ENCODE measurements at regions of chr20 and their contacts with region 1.

Region 1: DNA sequence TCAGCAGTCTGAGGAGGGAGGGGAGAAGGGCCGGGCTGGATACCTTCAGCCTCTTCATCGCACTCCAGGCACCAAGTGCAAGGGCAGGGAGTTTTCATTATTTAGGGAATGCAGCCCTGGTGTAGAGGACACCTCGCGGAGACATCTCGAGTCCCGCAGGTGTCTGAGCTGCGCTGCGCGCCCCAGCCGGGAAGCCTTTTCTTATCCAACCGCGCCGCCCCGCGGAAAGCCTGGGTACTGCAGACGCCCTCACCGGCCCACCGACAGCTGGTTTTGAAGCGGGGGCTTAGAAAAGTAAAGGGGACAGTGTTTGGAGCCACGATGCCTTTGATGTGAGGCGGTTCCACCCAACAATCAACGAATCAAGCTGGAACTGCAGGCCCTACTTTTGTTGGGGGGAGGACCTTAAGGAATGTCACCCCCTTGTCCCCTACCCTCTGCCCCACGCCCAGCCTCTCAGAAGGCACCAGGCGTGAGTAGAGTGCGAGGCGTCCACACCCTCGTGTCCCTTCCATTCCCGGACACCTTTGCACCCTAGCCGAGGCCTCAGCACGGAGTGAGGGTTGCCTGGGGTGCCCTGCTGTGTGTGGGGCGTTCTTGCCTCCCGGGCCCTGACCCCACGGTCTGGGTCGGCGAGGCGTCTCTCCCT is 8.6 kb downstream of the NKX2-2 start:
- DNase-seq: peak in 9 of 10 donors; percentile 46 to 86 (median 80)
- H3K4me3 ChIP-seq: peak overlapping the region in 58 of 59 donors; percentile 25 to 73 (median 52)
- H3K27ac ChIP-seq: peak overlapping the region; percentile 47 to 98 (median 94)
- H3K27me3 ChIP-seq: peaks cover 0 to 76% (median 48%) of the 10 kb centered on the region in 45 donors
- CTCF ChIP-seq: peak; percentile 86 to 100 (median 98)

Region 2: GRCh38 chr20:20837574-20838021 is 667.7 kb before region 1 on chr20:
- intact Hi-C with region 1: loop called in 1 of 2 experiments (anchors 5 kb)
- DNase-seq: peak; percentile 41 to 83 (median 72)
- H3K4me3 ChIP-seq: peak overlapping the region in 18 of 59 donors; percentile 6 to 31 (median 18)
- H3K27ac ChIP-seq: no peak overlapping the region
- H3K27me3 ChIP-seq: peaks cover 0 to 26% (median 0%) of the 10 kb centered on the region in 45 donors
- CTCF ChIP-seq: peak; percentile 66 to 95 (median 84)

Region 3: GRCh38 chr20:20860078-20860806 is 645.0 kb before region 1 on chr20:
- intact Hi-C with region 1: loop called (anchors 5 kb)
- DNase-seq: peak; percentile 76 to 97 (median 91)
- H3K4me3 ChIP-seq: peak overlapping the region in 1 of 59 donors; percentile 5
- H3K27ac ChIP-seq: peak overlapping the region in 1 of 59 donors; percentile 57
- H3K27me3 ChIP-seq: peaks cover 0 to 15% (median 0%) of the 10 kb centered on the region in 45 donors
- CTCF ChIP-seq: peak; percentile 84 to 100 (median 98)

Region 4: GRCh38 chr20:21099751-21100577 is 405.3 kb before region 1 on chr20:
- intact Hi-C with region 1: loop called (anchors 5 kb)
- DNase-seq: peak in 4 of 10 donors; percentile 18 to 53 (median 43)
- H3K4me3 ChIP-seq: peak overlapping the region; percentile 29 to 76 (median 57)
- H3K27ac ChIP-seq: peak overlapping the region in 52 of 59 donors; percentile 3 to 84 (median 60)
- H3K27me3 ChIP-seq: peaks cover 3 to 95% (median 72%) of the 10 kb centered on the region in 45 donors
- CTCF ChIP-seq: peak in 4 of 56 donors; percentile 6 to 27 (median 13)

Region 5: GRCh38 chr20:21303061-21303871 is 202.0 kb before region 1 on chr20 and contains the start of gene XRN2:
- intact Hi-C with region 1: loop called (anchors 5 kb)
- DNase-seq: peak; percentile 86 to 98 (median 94)
- H3K4me3 ChIP-seq: peak within 1 kb of the TSS; percentile 72 to 100 (median 97)
- H3K27ac ChIP-seq: peak within 1 kb of the TSS; percentile 75 to 98 (median 94)
- H3K27me3 ChIP-seq: no peaks in the 10 kb centered on the region
- CTCF ChIP-seq: peak in 51 of 56 donors; percentile 14 to 73 (median 52)
- total RNA-seq, gene XRN2: 22.9 to 32.8 (median 27.2) TPM

Region 6: DNA sequence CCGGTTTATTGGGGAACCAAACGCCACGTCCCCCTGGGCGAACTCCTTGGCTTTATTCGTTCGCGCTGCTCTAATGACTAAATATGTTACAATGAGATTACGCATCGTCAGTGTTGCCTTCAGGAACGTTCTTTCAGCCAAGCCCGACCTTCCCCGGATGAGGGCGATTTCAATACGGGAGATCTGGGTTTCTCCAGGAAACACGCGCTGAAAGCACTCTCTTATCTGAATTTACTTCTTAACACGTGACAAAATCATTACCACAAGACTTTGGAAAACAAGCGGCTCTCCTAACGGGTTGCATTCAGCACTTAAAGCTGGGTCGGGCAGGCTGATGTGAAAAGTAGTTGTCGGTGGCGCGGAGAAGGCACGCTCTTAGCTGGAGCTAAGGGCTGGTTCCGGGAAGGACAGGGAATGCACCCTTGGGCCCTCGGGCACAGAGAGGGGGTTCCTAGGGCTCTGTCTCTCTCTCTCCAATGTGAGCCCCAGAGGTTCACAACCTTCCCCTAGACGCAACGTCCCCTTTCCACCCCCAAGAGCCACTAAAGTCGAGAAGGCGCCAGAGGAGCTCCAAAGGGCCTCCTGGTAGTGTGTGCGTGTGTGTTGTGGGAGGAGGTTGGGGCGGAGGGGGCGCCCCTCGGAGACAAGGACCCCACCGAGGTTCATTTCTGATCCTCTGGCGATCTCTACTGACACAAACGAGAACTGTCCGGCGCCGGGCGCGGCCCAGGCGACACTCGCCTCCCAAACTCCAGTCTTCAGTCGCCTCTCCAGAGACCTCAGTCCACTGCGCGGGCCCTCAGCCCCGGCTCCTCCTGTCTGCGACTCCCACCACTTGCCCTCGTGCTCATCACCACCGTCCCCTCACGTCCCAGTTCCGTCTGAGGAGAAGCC is 15.7 kb after region 1 on chr20:
- intact Hi-C with region 1: loop called in 1 of 2 experiments (anchors 2 kb)
- DNase-seq: peak in 4 of 10 donors; percentile 62 to 77 (median 70)
- H3K4me3 ChIP-seq: peak overlapping the region; percentile 33 to 83 (median 66)
- H3K27ac ChIP-seq: peak overlapping the region in 58 of 59 donors; percentile 20 to 98 (median 86)
- H3K27me3 ChIP-seq: peaks cover 0 to 98% (median 79%) of the 10 kb centered on the region in 45 donors
- CTCF ChIP-seq: peak in 55 of 56 donors; percentile 18 to 79 (median 64)

Region 7: GRCh38 chr20:21607971-21608725 is 102.9 kb after region 1 on chr20:
- intact Hi-C with region 1: loop called (anchors 2 kb)
- DNase-seq: peak; percentile 33 to 93 (median 90)
- H3K4me3 ChIP-seq: peak overlapping the region in 54 of 59 donors; percentile 11 to 62 (median 38)
- H3K27ac ChIP-seq: peak overlapping the region; percentile 72 to 99 (median 96)
- H3K27me3 ChIP-seq: peaks cover 0 to 34% (median 5%) of the 10 kb centered on the region in 45 donors
- CTCF ChIP-seq: peak in 18 of 56 donors; percentile 4 to 34 (median 16)

Measured in dorsolateral prefrontal cortex (tissue), 120 donors.